BJ (cell line): ENCODE measurements at regions of chr4 and their contacts with region 1.

Region 1: DNA sequence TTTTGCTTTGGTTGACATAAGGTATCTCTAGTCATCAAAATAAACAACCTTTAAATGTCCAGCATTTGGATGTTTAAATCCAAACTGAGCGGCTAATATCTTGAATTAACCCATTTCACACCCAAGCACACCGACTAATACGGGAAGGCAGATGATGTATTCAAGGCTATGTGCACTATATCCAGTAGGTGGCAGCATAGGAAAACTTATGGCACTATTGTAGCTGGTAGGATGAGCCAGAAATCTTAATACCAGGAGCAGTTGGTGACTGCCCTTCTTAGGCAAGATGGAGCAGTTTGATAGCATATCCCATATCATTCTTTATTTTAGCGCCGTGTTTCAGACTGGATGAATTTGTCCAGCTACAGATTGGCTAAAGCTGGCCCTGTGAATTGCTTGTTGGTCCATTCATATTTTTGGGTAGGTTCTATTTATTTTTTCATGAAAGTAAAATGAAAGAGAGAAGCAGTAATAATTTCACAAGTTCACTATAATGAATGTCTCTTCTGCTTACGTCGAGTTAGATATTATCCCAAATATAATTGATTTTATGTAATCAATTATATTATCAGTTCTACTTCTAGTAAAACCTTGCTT is 24.4 kb downstream of the UCHL1 start:
- DNase-seq: no peak
- H3K4me3 ChIP-seq: no peak overlapping the region
- H3K27me3 ChIP-seq: no peaks in the 10 kb centered on the region
- CTCF ChIP-seq: peak; percentile 79

Region 2: DNA sequence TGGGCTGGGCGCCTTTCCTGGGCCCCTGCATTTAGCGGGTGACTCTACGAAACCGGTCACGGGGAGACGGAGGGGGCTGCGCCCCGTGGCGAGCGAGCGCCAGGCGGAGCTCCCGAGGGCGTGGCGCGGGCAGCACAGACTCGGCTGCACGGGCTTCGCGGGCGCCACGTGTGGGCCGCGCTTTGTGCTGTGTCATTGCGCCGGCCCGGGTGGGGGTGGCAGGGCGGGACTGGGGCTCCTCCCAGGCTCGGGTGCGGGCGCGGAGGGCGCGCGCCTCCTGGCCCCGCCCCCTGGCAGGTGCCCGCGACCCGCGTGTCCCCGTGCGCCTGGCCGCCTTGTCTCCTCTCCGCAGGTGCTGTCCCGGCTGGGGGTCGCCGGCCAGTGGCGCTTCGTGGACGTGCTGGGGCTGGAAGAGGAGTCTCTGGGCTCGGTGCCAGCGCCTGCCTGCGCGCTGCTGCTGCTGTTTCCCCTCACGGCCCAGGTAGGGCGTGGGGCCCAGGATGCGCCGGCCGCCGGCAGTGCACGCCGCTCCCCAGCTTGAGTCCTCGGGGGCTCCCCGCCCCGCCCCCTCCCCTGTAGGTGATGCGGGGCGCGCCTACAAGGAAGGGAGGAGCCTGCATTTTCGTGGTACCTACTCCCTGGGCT is 23.8 kb before region 1 on chr4:
- CTCF ChIA-PET with region 1: interaction called, 10 read pairs
- POLR2A ChIA-PET with region 1: no interaction called
- DNase-seq: no peak
- H3K4me3 ChIP-seq: peak overlapping the region; percentile 88
- H3K27me3 ChIP-seq: peaks cover 3% of the 10 kb centered on the region; the same call in 1 of the 2 replicates
- CTCF ChIP-seq: no peak

Region 3: GRCh38 chr4:41304221-41304620 is 23.1 kb after region 1 on chr4:
- CTCF ChIA-PET with region 1: no interaction called
- POLR2A ChIA-PET with region 1: no interaction called
- DNase-seq: no peak
- H3K4me3 ChIP-seq: no peak overlapping the region
- H3K27me3 ChIP-seq: no peaks in the 10 kb centered on the region; the same call in 1 of the 2 replicates
- CTCF ChIP-seq: no peak

Region 4: GRCh38 chr4:41644288-41644914 is 363.3 kb after region 1 on chr4:
- CTCF ChIA-PET with region 1: interaction called, 23 read pairs
- POLR2A ChIA-PET with region 1: no interaction called
- DNase-seq: no peak
- H3K4me3 ChIP-seq: no peak overlapping the region
- H3K27me3 ChIP-seq: no peaks in the 10 kb centered on the region
- CTCF ChIP-seq: peak; percentile 84

Region 5: GRCh38 chr4:41661442-41662076 is 380.4 kb after region 1 on chr4:
- CTCF ChIA-PET with region 1: interaction called, 94 read pairs
- POLR2A ChIA-PET with region 1: interaction called, 4 read pairs
- DNase-seq: no peak
- H3K4me3 ChIP-seq: no peak overlapping the region
- H3K27me3 ChIP-seq: no peaks in the 10 kb centered on the region
- CTCF ChIP-seq: peak; percentile 89

Region 6: GRCh38 chr4:41683321-41683720 is 402.2 kb after region 1 on chr4:
- CTCF ChIA-PET with region 1: interaction called, 11 read pairs
- POLR2A ChIA-PET with region 1: no interaction called
- DNase-seq: peak; percentile 8
- H3K4me3 ChIP-seq: no peak overlapping the region
- H3K27me3 ChIP-seq: no peaks in the 10 kb centered on the region
- CTCF ChIP-seq: no peak

Region 7: DNA sequence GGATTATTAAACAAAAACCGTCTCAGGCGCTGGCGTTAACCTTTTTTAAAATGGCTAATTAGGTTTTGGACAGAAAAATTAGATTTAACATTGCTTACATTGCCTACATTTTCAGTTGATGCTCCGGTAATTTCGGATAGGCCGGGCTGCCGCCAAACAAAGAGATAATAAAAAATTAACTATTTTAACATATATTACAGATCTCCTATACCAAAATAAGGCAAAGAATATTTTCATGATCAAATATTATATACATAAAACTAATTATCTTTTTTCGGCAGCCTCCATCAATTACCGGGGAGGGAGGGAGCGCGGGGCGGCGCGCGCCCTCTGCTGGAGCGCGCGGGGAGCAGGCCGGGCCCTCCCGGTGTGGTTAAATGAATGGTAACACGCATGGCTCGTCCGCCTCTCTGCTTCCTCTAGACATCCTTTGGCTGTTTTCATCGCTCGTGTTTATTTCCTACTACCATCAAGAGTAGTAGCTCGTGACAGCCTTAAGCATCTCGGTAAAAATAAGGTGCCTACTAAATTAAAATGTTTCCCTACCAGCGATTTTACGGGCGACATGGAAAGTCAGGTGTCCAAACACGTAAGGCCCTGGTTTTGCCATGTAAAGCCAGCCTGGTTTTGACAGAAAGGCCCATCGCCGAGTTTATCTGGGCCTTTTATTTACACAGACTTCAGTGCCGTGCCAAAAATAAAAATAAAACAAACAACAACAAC is 601.6 kb after region 1 on chr4:
- CTCF ChIA-PET with region 1: interaction called, 16 read pairs
- POLR2A ChIA-PET with region 1: no interaction called
- DNase-seq: no peak
- H3K4me3 ChIP-seq: no peak overlapping the region
- H3K27me3 ChIP-seq: peaks cover 43% of the 10 kb centered on the region
- CTCF ChIP-seq: peak; percentile 93

Region 8: GRCh38 chr4:41887821-41888686 is 606.9 kb after region 1 on chr4:
- CTCF ChIA-PET with region 1: interaction called, 16 read pairs
- POLR2A ChIA-PET with region 1: no interaction called
- DNase-seq: peak; percentile 1
- H3K4me3 ChIP-seq: no peak overlapping the region
- H3K27me3 ChIP-seq: peaks cover 24% of the 10 kb centered on the region
- CTCF ChIP-seq: peak; percentile 83